ENCODE measurements at regions of chr12 and their contacts with region 1.

Region 1: GRCh38 chr12:59808317-59808910 is 212.6 kb downstream of the SLC16A7 start:
- DNase-seq: no peak
- H3K4me3 ChIP-seq: no peak overlapping the region
- H3K27ac ChIP-seq: no peak overlapping the region
- H3K4me1 ChIP-seq: peaks cover 0 to 10% (median 0%) of the 10 kb centered on the region in 4 donors
- H3K27me3 ChIP-seq: no peaks in the 10 kb centered on the region
- CTCF ChIP-seq: peak in 3 of 4 experiments; percentile 51 to 69 (median 56)
- EP300 ChIP-seq: no peak
- POLR2A ChIP-seq: no peak

Region 2: DNA sequence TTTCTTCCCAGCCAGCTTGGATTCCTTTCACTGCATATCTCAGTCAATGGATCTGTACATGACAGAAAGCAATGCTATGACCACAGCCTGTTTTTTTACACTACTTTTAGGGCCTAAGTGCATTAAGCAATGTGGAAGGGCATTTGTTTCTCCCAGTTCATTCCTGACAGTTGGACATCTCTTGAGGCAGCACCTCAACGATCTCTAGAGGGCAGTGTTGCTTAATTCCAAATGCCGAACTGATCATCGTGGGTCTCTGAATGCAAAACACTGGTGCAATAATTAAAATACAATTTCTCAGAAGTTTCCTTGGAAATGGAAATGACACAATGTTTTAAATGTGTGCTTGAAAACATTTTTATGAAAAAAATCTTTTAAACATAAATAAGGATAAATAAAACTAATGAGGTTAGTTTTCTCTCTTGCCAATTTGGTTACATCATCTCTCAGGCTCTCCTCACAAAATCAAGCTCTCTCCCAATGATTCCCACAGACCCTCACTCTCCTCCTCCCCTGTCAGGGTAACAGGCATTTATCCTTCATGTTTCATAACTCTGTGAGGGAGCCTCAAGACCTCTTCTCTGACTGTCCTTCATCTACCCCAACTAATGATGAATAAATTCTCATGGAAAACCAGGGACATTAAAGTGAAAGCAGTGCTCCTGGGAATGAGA is 405.0 kb before region 1 on chr12:
- intact Hi-C with region 1: loop called (anchors 2 kb)
- DNase-seq: no peak
- H3K4me3 ChIP-seq: no peak overlapping the region
- H3K27ac ChIP-seq: no peak overlapping the region
- H3K4me1 ChIP-seq: peaks cover 0 to 5% (median 0%) of the 10 kb centered on the region in 4 donors
- H3K27me3 ChIP-seq: no peaks in the 10 kb centered on the region
- CTCF ChIP-seq: peak in 3 of 4 experiments; percentile 34 to 69 (median 38)
- EP300 ChIP-seq: no peak
- POLR2A ChIP-seq: no peak

Measured in sigmoid colon (tissue), 7 donors.